ENCODE measurements at regions of chr19 and their contacts with region 1.

Region 1: GRCh38 chr19:48795055-48795684 is 15.7 kb downstream of the BCAT2 start:
- DNase-seq: no peak
- H3K4me3 ChIP-seq: peak overlapping the region; percentile 30 to 56
- H3K27ac ChIP-seq: peak overlapping the region; percentile 96
- H3K4me1 ChIP-seq: peaks cover 15% of the 10 kb centered on the region
- H3K27me3 ChIP-seq: no peaks in the 10 kb centered on the region
- CTCF ChIP-seq: peak; percentile 95 to 99 (median 97)
- POLR2A ChIP-seq: no peak

Region 2: GRCh38 chr19:48835734-48836088 is 40.5 kb after region 1 on chr19:
- intact Hi-C with region 1: loop called (anchors 2 kb)
- DNase-seq: peak in 1 of 2 donors; percentile 97
- H3K4me3 ChIP-seq: peak overlapping the region; percentile 47 to 48
- H3K27ac ChIP-seq: peak overlapping the region; percentile 93
- H3K4me1 ChIP-seq: peaks cover 18% of the 10 kb centered on the region
- H3K27me3 ChIP-seq: no peaks in the 10 kb centered on the region
- CTCF ChIP-seq: peak; percentile 91 to 98 (median 94)
- POLR2A ChIP-seq: peak in 1 of 2 donors; percentile 29

Region 3: DNA sequence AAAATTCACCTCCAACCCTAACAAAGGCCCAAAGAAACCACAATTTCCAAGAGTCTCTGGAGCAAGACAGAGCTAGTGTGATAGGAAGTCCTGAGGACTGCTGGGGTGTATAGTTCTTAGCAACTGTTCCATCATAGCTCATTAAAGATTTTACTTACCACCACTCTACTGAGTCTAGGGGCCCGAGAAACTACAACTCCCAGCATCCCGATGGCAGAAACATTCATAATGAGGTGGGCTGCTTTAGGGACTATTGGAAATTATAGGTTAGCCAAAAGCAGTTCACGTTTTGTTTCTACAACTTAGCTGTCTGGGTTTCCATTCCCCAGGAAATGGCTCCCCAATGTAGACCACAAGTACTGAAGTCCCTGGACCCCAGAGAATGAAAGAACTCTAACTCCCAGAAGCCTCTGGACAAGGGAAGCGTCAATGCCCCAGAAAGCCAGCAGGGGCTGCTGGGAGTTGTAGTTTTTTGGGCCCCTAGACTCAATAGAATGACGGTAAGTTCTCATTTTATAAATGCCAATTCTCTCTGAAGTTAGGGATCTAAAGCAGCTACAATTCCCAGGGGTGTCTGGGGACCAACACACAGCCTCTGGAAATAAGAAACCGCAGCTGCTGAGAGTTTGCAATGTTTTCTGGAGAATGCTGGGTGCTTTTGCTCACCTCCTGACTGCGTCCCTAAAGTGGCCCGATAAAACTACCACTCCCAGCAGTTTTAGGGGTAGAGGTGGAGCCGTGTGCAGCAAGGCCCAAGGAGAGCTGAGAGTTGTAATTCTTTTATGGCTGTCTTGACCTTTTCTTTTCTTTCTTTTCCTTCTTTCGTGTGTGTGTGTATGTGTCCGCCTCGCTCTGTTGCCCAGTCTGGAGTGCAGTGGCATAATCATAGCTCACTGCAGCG is 181.0 kb after region 1 on chr19:
- intact Hi-C with region 1: loop called (anchors 5 kb)
- DNase-seq: no peak
- H3K4me3 ChIP-seq: no peak overlapping the region
- H3K27ac ChIP-seq: no peak overlapping the region
- H3K4me1 ChIP-seq: peaks cover 15% of the 10 kb centered on the region
- H3K27me3 ChIP-seq: no peaks in the 10 kb centered on the region
- CTCF ChIP-seq: no peak
- POLR2A ChIP-seq: no peak

Measured in vagina (tissue), 2 donors.